Prostate gland (tissue), 2 donors: ENCODE measurements at regions of chr13 and their contacts with region 1.

Region 1: GRCh38 chr13:27449936-27450828 is at the start of gene MTIF3:
- DNase-seq: peak; percentile 96
- H3K4me3 ChIP-seq: peak within 1 kb of the TSS; percentile 81 to 95
- H3K27ac ChIP-seq: peak within 1 kb of the TSS; percentile 95 to 98
- H3K4me1 ChIP-seq: no peaks in the 10 kb centered on the region
- H3K27me3 ChIP-seq: no peaks in the 10 kb centered on the region
- CTCF ChIP-seq: peak in 2 of 4 experiments; percentile 9 to 24
- POLR2A ChIP-seq: peak; percentile 88
- total RNA-seq, gene MTIF3: 44.8 to 52.3 TPM

Region 2: GRCh38 chr13:27171827-27172494 is 278.2 kb before region 1 on chr13:
- intact Hi-C with region 1: no loop called
- DNase-seq: peak; percentile 88
- H3K4me3 ChIP-seq: peak overlapping the region; percentile 86 to 89
- H3K27ac ChIP-seq: peak overlapping the region; percentile 90 to 95
- H3K4me1 ChIP-seq: peaks cover 6% of the 10 kb centered on the region
- H3K27me3 ChIP-seq: no peaks in the 10 kb centered on the region
- CTCF ChIP-seq: peak in 2 of 4 experiments; percentile 13 to 31
- POLR2A ChIP-seq: peak; percentile 36

Region 3: DNA sequence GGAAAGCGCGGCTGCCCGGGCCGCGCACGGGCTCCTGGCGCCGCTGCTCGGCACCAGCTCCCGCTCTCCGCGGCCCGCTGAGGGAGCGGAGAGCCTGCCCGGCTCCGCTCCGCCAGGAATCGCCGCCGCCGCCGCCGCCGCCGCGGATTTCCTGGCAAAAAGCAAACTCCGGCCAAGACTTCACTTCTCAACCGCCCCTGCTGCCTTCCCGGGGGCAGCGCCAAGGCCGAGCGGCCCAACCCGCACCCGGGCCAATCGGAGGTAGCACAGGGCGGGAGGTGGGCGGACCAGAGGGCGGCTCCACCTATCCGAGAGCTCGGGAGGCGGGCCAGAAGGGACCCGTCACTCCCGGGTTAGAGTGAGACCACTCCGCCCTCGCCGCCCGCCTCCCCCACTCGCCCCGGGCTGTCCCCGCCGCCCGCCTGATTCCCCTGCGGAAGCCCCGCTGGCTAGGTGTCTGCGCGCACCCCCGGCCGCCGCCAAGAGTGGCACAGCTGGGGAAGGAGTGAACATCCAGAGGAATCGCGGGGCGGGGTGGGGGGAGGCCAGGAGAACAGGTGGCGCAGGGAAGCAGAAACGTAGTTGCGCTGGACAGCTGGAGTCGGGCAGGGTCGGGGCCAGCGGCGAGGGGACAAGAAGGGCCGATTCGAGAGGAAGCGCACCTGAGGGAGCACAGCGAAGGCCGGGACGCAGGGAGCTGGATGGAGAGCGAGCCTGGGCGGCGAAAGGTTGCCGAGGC is 170.4 kb after region 1 on chr13 and contains the start of gene LNX2:
- intact Hi-C with region 1: loop called (anchors 5 kb)
- DNase-seq: peak; percentile 99
- H3K4me3 ChIP-seq: peak within 1 kb of the TSS; percentile 96 to 97
- H3K27ac ChIP-seq: peak within 1 kb of the TSS; percentile 96 to 97
- H3K4me1 ChIP-seq: peaks cover 10% of the 10 kb centered on the region
- H3K27me3 ChIP-seq: no peaks in the 10 kb centered on the region
- CTCF ChIP-seq: no peak
- POLR2A ChIP-seq: peak; percentile 98
- total RNA-seq, gene LNX2: 26.3 to 34.1 TPM